ENCODE measurements at regions of chr3 and their contacts with region 1.

Region 1: GRCh38 chr3:139561959-139562676 is 22.6 kb upstream of the RBP1 start:
- DNase-seq: peak in 2 of 5 donors; percentile 25 to 36
- ATAC-seq: peak; percentile 71 to 82 (median 74)
- H3K4me3 ChIP-seq: no peak overlapping the region
- H3K27ac ChIP-seq: no peak overlapping the region
- H3K4me1 ChIP-seq: no peaks in the 10 kb centered on the region
- H3K27me3 ChIP-seq: no peaks in the 10 kb centered on the region
- CTCF ChIP-seq: peak; percentile 45 to 75 (median 62)
- POLR2A ChIP-seq: no peak

Region 2: DNA sequence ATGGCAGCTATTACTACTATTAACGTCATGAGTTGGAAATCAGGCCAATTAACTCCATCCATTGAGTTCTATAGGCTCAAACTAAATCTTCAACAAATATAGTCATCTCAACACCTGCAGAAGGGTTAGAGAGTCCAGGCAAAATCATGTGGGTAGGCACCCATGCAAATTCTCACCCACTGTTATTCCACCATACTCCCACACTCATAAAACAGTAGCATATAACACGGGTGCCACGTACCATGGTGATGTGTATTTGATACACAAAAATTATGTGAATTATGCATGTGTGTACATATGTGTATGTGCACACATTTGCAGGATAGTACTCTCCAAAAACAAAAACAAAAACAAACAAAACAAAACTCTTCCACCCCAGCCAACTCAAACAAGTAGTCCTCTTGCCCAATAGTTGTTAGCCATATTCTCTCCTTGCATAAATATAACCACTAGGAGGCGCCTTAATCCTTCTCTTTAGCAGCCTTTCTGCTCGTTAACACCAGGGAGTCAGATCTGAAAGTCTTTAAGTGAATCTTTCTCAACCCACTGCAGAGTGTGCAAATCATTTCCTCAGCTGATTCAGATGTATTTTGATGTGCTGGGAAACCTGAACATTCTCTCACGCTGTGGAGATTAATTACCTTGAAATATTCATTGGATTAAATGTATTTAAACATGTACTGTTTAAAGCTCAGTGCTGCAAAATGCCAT is 134.7 kb before region 1 on chr3:
- intact Hi-C with region 1: loop called (anchors 1 to 5 kb)
- DNase-seq: no peak
- ATAC-seq: peak; percentile 64 to 90 (median 82)
- H3K4me3 ChIP-seq: no peak overlapping the region
- H3K27ac ChIP-seq: no peak overlapping the region
- H3K4me1 ChIP-seq: peaks cover 0 to 5% (median 0%) of the 10 kb centered on the region in 12 donors
- H3K27me3 ChIP-seq: no peaks in the 10 kb centered on the region
- CTCF ChIP-seq: peak; percentile 71 to 88 (median 85)
- POLR2A ChIP-seq: no peak

Region 3: DNA sequence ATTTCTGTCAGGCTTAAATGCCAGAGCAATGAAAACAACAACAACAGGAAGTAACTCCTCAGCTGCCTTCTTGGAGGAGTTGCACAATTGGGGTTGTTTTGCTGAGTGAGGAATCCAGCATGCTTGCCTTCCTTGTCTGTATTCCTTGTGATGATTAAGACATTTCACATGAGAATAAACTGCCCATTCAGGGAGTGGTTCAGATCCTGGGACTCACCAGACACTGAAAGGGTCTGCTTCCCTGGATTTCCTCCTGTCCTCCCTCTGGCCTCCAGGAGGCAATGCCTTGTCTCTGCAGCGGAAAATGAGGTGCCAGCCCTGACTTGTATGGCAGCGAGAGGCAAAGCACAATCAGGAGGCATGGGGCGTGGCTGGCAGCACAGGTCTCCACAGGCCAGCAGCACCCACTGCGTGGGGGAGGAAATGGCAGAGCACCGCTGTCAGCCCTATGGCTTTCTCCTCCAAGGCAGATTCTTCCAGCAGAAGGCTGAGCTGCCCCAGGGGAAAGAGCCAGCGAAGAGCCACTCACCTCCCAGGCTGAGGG is 127.3 kb before region 1 on chr3:
- intact Hi-C with region 1: loop called in 2 of 10 experiments (anchors 5 kb)
- DNase-seq: peak in 1 of 5 donors; percentile 29
- ATAC-seq: peak in 3 of 4 donors; percentile 42 to 72 (median 51)
- H3K4me3 ChIP-seq: no peak overlapping the region
- H3K27ac ChIP-seq: peak overlapping the region in 1 of 12 donors; percentile 80
- H3K4me1 ChIP-seq: peaks cover 0 to 21% (median 0%) of the 10 kb centered on the region in 12 donors
- H3K27me3 ChIP-seq: no peaks in the 10 kb centered on the region
- CTCF ChIP-seq: no peak
- POLR2A ChIP-seq: no peak

Region 4: DNA sequence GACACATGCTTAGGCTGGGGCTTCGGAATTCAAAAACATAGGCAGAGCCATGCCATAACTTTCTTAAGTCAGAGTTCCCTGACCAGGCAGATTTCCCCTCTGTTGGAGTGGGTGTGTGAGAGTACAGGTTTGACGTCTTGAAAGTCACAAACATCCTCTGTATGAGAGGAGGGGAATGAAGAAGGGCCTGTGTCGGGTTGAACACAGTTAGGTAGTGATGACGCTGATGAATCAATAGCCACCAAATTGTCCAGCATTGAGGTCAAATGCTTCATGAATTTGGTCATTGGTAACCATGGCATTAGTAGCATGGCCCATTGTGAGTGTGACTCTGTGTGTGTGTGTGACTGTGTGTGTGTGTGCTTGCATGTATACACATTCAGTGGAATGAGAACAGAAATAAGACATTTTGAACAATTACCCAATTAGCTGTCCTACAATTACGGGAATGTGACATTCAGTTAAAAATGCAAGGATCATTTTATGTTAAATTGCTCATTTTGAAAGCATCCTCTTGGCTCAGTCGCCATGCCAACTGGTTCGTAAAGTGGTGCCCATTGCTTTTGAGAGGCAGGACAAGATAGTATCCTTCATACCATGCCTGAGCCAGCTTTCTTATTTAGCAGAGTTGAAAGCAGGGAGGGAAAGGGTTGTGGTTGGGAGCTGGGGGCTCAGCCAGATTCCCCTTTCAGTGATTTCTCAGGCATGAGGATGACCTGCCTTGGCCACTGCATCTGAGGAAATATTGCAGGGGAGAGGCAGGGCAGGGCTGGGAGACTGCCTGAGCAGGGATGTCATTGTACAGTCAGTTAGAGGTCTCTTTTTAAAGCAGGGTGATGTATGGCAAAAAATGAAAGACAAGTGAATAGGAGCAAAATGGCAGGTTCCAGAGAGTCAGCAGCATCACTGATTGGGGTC is 121.2 kb before region 1 on chr3:
- intact Hi-C with region 1: loop called in 2 of 10 experiments (anchors 5 kb)
- DNase-seq: no peak
- ATAC-seq: no peak
- H3K4me3 ChIP-seq: no peak overlapping the region
- H3K27ac ChIP-seq: no peak overlapping the region
- H3K4me1 ChIP-seq: no peaks in the 10 kb centered on the region
- H3K27me3 ChIP-seq: no peaks in the 10 kb centered on the region
- CTCF ChIP-seq: no peak
- POLR2A ChIP-seq: no peak

Region 5: GRCh38 chr3:139468399-139468798 is 93.7 kb before region 1 on chr3:
- intact Hi-C with region 1: no loop called
- DNase-seq: no peak
- ATAC-seq: no peak
- H3K4me3 ChIP-seq: no peak overlapping the region
- H3K27ac ChIP-seq: no peak overlapping the region
- H3K4me1 ChIP-seq: no peaks in the 10 kb centered on the region
- H3K27me3 ChIP-seq: no peaks in the 10 kb centered on the region
- CTCF ChIP-seq: no peak
- POLR2A ChIP-seq: no peak

Region 6: GRCh38 chr3:139519998-139520737 is 42.0 kb before region 1 on chr3:
- intact Hi-C with region 1: loop called in 2 of 10 experiments (anchors 5 kb)
- DNase-seq: no peak
- ATAC-seq: peak in 3 of 4 donors; percentile 35 to 49 (median 43)
- H3K4me3 ChIP-seq: no peak overlapping the region
- H3K27ac ChIP-seq: no peak overlapping the region
- H3K4me1 ChIP-seq: peaks cover 0 to 15% (median 0%) of the 10 kb centered on the region in 12 donors
- H3K27me3 ChIP-seq: no peaks in the 10 kb centered on the region
- CTCF ChIP-seq: peak in 8 of 12 donors; percentile 7 to 40 (median 20)
- POLR2A ChIP-seq: no peak

Region 7: GRCh38 chr3:139533781-139534443 is 28.2 kb before region 1 on chr3:
- intact Hi-C with region 1: loop called in 1 of 10 experiments (anchors 1 kb)
- DNase-seq: peak in 4 of 5 donors; percentile 36 to 53 (median 47)
- ATAC-seq: peak in 2 of 4 donors; percentile 23 to 48
- H3K4me3 ChIP-seq: no peak overlapping the region
- H3K27ac ChIP-seq: peak overlapping the region in 11 of 12 donors; percentile 42 to 80 (median 70)
- H3K4me1 ChIP-seq: peaks cover 11 to 60% (median 42%) of the 10 kb centered on the region in 12 donors
- H3K27me3 ChIP-seq: peaks cover 0 to 1% (median 0%) of the 10 kb centered on the region in 9 donors
- CTCF ChIP-seq: no peak
- POLR2A ChIP-seq: no peak

Measured in heart left ventricle (tissue), 16 donors.